ENCODE measurements at regions of chr22 and their contacts with region 1.

Region 1: GRCh38 chr22:38051900-38052862 is 5.0 kb upstream of the PICK1 start:
- DNase-seq: peak; percentile 92
- ATAC-seq: peak; percentile 84
- H3K4me3 Mint-ChIP-seq: no peak overlapping the region
- H3K27ac Mint-ChIP-seq: peak overlapping the region; percentile 23; the same call in 1 of the 2 replicates
- H3K4me1 Mint-ChIP-seq: peaks cover 7% of the 10 kb centered on the region
- H3K27me3 Mint-ChIP-seq: no peaks in the 10 kb centered on the region; the same call in 1 of the 2 replicates
- CTCF ChIP-seq: peak; percentile 83

Region 2: GRCh38 chr22:37870273-37870672 is 181.9 kb before region 1 on chr22:
- CTCF ChIA-PET with region 1: no interaction called
- POLR2A ChIA-PET with region 1: no interaction called
- DNase-seq: no peak
- ATAC-seq: no peak
- H3K4me3 Mint-ChIP-seq: no peak overlapping the region
- H3K27ac Mint-ChIP-seq: peak overlapping the region; percentile 78; the same call in 1 of the 2 replicates
- H3K4me1 Mint-ChIP-seq: no peaks in the 10 kb centered on the region
- H3K27me3 Mint-ChIP-seq: no peaks in the 10 kb centered on the region
- CTCF ChIP-seq: no peak

Region 3: DNA sequence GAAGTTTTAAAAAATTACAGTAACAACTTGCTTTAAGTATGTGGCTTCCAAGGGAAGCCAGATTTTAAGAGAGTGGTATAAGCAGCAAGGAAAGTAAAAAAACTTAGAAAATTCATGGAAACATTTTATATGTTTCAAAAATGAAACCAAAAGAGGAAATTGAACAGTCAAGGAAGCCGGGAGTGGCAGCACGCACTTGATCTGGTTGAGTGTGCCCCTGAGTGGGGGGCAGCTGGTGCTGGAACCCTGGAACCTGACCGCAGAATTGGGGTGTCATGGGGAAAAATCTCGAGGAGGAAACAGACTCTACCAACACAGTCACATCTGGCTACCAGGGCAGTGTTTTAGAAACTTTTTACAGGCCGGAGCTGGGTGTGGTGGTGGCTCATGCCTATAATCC is 132.1 kb before region 1 on chr22:
- CTCF ChIA-PET with region 1: no interaction called
- POLR2A ChIA-PET with region 1: no interaction called
- DNase-seq: no peak
- ATAC-seq: no peak
- H3K4me3 Mint-ChIP-seq: no peak overlapping the region
- H3K27ac Mint-ChIP-seq: peak overlapping the region; percentile 41; the same call in 1 of the 2 replicates
- H3K4me1 Mint-ChIP-seq: no peaks in the 10 kb centered on the region
- H3K27me3 Mint-ChIP-seq: no peaks in the 10 kb centered on the region
- CTCF ChIP-seq: no peak

Region 4: GRCh38 chr22:37961062-37961461 is 91.1 kb before region 1 on chr22:
- CTCF ChIA-PET with region 1: no interaction called
- POLR2A ChIA-PET with region 1: no interaction called
- DNase-seq: no peak
- ATAC-seq: no peak
- H3K4me3 Mint-ChIP-seq: no peak overlapping the region
- H3K27ac Mint-ChIP-seq: no peak overlapping the region
- H3K4me1 Mint-ChIP-seq: no peaks in the 10 kb centered on the region; the same call in 1 of the 2 replicates
- H3K27me3 Mint-ChIP-seq: no peaks in the 10 kb centered on the region
- CTCF ChIP-seq: no peak

Region 5: GRCh38 chr22:38026130-38027111 is 25.8 kb before region 1 on chr22:
- CTCF ChIA-PET with region 1: interaction called, 37 read pairs
- POLR2A ChIA-PET with region 1: no interaction called
- DNase-seq: no peak
- ATAC-seq: no peak
- H3K4me3 Mint-ChIP-seq: no peak overlapping the region
- H3K27ac Mint-ChIP-seq: no peak overlapping the region
- H3K4me1 Mint-ChIP-seq: peaks cover 9% of the 10 kb centered on the region
- H3K27me3 Mint-ChIP-seq: peaks cover 2% of the 10 kb centered on the region
- CTCF ChIP-seq: no peak

Region 6: DNA sequence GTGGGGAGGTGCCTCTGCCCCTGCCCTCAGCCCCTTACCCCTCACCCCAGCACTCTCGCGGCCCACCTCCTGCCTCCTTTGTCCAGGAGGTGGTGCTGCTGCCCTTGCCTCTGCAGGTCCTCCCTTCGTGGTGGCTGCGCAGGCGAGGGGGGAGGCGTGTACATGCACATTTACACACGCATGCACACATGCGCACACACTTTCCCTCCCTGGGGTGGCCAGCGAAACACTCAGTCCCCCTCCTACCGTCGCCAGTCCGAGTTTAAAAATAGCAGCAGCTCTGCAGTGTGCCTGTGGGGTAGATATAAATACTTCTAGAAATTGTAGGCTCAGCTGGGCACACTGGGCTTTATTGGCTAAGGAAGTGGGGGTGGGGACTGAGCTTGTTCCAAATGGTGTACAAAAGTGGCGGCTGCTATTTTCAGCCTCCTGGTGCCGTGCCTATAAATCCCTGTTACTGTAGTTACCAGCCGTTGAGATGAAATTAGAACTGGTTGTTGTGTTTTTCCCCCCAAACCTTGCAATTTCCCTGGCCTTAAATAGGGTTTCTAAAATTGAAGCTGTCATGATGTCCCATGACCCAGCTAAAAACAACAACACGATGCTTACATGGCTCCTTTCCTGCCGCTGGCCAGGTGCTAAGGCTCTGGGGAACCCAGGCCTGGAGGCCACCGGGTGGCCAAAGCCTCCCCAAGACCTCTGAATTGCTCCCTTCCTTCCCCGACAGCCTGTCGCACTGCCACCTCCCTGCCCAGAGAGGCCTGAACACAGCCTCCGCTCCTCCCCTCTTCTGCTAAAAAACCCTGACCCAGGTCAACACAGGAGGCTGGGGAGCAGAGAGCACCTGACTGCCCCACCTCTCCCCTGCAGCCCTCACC is 17.4 kb after region 1 on chr22:
- CTCF ChIA-PET with region 1: interaction called, 42 read pairs
- POLR2A ChIA-PET with region 1: interaction called, 4 read pairs
- DNase-seq: peak; percentile 58
- ATAC-seq: peak; percentile 66
- H3K4me3 Mint-ChIP-seq: no peak overlapping the region
- H3K27ac Mint-ChIP-seq: peak overlapping the region; percentile 45; the same call in 1 of the 2 replicates
- H3K4me1 Mint-ChIP-seq: peaks cover 2% of the 10 kb centered on the region; the same call in 1 of the 2 replicates
- H3K27me3 Mint-ChIP-seq: no peaks in the 10 kb centered on the region
- CTCF ChIP-seq: peak; percentile 25; the same call in 1 of the 2 replicates

Region 7: DNA sequence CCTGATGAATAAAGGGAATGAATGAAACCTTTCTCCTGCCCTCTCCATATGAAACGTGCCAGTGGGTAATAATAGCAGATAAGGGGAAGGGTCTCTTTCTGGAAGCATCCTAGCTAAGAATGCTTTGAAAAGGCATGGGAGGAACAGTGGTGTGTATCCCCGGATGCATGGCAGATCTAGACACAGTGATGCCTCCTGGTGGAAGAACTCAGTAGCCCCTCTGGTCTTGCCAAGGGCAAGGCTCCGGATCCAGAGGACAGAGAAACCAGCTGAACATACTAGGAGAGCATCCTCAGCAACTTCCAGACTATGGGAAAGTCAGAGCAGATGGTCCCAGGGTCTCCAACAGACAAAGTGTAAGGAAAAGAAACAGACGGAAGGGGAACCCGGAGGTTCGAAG is 51.9 kb after region 1 on chr22:
- CTCF ChIA-PET with region 1: interaction called, 91 read pairs
- POLR2A ChIA-PET with region 1: no interaction called
- DNase-seq: peak; percentile 62
- ATAC-seq: peak; percentile 86
- H3K4me3 Mint-ChIP-seq: no peak overlapping the region
- H3K27ac Mint-ChIP-seq: peak overlapping the region; percentile 90; the same call in 1 of the 2 replicates
- H3K4me1 Mint-ChIP-seq: no peaks in the 10 kb centered on the region
- H3K27me3 Mint-ChIP-seq: 0 out of 2 replicates have a peak, but pooled peaks cover 2% of the 10 kb centered on the region
- CTCF ChIP-seq: no peak; the same call in 1 of the 2 replicates

Region 8: DNA sequence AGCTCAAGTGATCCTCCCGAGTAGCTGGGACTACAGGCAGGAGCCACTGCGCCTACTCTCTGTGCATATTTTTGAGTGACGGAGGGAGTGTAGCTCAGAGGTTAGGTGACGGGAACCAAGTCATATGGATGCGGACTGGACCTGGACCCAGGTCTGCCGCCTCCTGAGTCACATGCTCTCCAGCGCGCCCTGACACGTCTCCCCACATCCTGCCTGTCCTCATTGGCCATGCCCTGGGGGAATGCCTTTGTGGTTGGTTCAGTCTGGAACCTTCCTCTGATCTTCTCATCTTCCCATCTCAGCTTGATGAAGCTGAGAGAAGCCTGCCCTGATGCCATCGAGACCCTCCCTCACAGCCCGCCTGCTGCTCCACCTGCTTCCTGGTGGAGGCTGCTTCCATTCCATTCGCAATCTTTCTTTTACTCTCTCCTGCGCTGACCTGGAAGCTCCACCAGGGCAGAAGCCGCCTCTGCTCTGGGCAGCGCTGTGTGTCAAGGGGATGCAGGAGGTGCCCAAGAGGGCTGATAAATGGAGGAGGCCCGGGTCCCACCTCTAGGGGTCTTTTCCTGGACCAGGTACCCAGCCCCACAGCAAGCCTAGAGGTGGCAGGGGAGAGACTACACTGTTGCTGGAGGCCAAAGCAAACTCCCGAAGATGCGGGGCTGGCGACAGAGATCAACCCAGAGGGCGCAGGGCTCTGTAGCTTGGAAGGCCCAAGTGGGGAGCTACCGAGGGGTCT is 72.2 kb after region 1 on chr22:
- CTCF ChIA-PET with region 1: interaction called, 16 read pairs
- POLR2A ChIA-PET with region 1: no interaction called
- DNase-seq: no peak
- ATAC-seq: peak; percentile 81
- H3K4me3 Mint-ChIP-seq: no peak overlapping the region
- H3K27ac Mint-ChIP-seq: peak overlapping the region; percentile 69
- H3K4me1 Mint-ChIP-seq: peaks cover 7% of the 10 kb centered on the region
- H3K27me3 Mint-ChIP-seq: no peaks in the 10 kb centered on the region
- CTCF ChIP-seq: no peak

Region 9: DNA sequence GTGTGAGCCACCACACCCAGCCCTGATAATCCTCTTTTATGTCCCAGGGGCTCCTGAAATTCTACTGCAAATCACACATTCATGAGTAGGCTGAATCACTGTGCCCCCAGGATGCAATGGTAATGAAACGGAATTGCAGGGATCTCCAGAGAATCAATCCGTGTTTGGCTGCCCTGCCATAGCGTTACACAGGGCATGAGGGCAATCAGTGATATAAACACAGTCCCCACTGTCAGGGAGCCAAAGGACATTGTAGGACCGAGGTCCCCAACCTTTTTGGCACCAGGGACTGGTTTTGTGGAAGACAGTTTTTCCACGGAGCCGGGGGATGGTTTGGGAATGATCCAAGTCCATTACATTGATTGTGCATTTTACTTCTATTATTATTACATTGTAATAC is 138.4 kb after region 1 on chr22:
- CTCF ChIA-PET with region 1: no interaction called
- POLR2A ChIA-PET with region 1: no interaction called
- DNase-seq: no peak
- ATAC-seq: no peak
- H3K4me3 Mint-ChIP-seq: no peak overlapping the region
- H3K27ac Mint-ChIP-seq: no peak overlapping the region
- H3K4me1 Mint-ChIP-seq: no peaks in the 10 kb centered on the region
- H3K27me3 Mint-ChIP-seq: peaks cover 31% of the 10 kb centered on the region
- CTCF ChIP-seq: no peak

Region 10: GRCh38 chr22:38207898-38208432 is 155.8 kb after region 1 on chr22:
- CTCF ChIA-PET with region 1: interaction called, 12 read pairs
- POLR2A ChIA-PET with region 1: no interaction called
- DNase-seq: no peak
- ATAC-seq: no peak
- H3K4me3 Mint-ChIP-seq: no peak overlapping the region
- H3K27ac Mint-ChIP-seq: no peak overlapping the region
- H3K4me1 Mint-ChIP-seq: peaks cover 3% of the 10 kb centered on the region
- H3K27me3 Mint-ChIP-seq: peaks cover 43% of the 10 kb centered on the region
- CTCF ChIP-seq: no peak

Region 11: GRCh38 chr22:38569972-38570778 is 518.0 kb after region 1 on chr22 and contains the start of gene DMC1:
- CTCF ChIA-PET with region 1: interaction called, 10 read pairs
- POLR2A ChIA-PET with region 1: no interaction called
- DNase-seq: peak; percentile 97
- ATAC-seq: peak; percentile 87
- H3K4me3 Mint-ChIP-seq: peak within 1 kb of the TSS; percentile 89
- H3K27ac Mint-ChIP-seq: peak within 1 kb of the TSS; percentile 95
- H3K4me1 Mint-ChIP-seq: peaks cover 28% of the 10 kb centered on the region
- H3K27me3 Mint-ChIP-seq: peaks cover 8% of the 10 kb centered on the region
- CTCF ChIP-seq: no peak
- total RNA-seq, gene DMC1: 4.3 to 4.5 TPM (median 4.5 TPM) in 3 replicates

Measured in WTC11 (cell line).